Posterior vena cava (tissue), 2 donors: ENCODE measurements at regions of chr16 and their contacts with region 1.

Region 1: DNA sequence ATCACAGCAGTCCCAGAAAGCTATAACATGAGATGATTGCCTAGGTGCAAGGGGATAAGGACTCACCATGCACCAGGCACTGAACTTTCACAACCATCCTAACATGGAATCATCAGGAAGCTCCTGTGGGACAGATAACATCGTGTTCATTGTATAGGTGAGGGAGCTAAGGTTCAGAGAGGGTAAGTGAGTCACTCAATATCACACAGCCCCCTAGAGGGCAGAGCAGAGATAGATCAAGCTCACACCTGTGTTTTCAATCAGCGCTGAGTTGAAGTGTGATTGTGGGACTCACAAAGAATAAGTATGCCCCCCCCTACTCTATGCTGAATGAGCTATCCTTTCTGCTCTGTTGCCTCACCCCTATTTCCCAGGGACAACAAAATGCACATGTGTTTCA is 377.7 kb upstream of the ERCC4 start:
- DNase-seq: no peak

Region 2: GRCh38 chr16:13376174-13376573 is 166.1 kb before region 1 on chr16:
- intact Hi-C with region 1: loop called in 1 of 2 experiments (anchors 10 kb)
- DNase-seq: no peak

Region 3: GRCh38 chr16:13480796-13481195 is 61.5 kb before region 1 on chr16:
- intact Hi-C with region 1: loop called in 1 of 2 experiments (anchors 10 kb)
- DNase-seq: no peak